ENCODE measurements at regions of chr1 and their contacts with region 1.

Region 1: DNA sequence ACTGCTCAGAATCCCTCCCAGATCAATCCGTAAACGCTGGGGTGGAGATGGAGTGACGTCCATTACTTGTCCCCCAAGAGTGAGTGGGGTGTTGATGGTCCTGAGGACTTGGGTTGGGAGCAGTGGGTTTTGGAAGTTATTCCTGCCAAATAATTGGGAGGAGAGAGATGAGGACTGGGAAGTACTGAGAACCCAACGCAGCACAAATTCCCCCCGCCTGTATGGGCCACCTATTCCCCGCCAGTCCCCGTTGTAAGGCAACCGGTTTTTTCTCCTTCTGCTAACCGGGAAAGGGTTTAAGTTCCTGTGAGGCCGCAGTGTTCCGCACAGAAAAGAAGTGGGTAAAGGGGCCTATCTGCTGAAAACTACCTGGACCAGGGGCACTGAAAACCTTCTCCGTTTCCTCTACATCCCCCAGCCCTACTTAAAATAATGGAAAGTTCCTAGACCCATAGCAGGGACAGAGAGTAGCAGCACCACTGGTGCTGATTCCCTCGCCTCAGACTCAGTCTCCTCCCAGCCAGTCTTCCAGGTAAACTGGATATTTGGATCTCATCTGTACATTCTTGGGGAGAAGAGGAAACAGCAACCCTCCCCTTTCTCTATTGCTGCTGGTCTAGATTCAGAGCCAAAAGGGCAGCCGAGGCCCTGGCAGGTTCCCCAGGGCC is 738 bp downstream of the LURAP1 start:
- DNase-seq: peak; percentile 6
- H3K4me3 ChIP-seq: peak overlapping the region; percentile 65
- CTCF ChIP-seq: no peak

Region 2: DNA sequence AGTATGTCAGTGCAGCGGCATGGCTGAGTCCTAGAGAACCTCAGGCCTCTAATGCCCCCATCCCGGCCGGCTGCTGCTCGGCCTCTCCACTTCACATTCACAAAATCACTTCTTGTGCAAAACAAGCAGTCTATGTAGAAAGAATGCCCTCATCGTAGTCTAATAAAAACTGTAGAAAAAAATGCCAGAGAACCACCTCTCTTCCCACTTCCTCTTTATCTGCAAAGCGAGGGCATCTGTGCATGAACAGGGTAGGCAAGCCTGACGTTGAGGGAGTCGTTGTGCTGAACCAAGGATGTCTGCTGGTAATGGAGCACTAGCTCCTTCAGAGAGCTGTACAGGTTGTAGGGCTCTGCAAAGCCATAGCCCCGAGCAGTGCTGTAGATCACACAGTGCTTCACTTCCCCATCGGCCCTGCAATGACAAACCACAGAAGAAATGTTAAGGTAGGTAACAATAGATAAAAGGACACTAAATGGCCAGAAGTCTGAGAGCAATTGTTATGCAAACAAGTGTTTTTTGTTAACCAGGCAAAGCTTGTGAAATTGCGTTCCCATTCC is 160.3 kb before region 1 on chr1:
- in situ Hi-C with region 1: loop called (anchors 10 kb)
- DNase-seq: no peak
- H3K4me3 ChIP-seq: no peak overlapping the region
- CTCF ChIP-seq: no peak